Mammary epithelial cell (primary cell): ENCODE measurements at regions of chr2 and their contacts with region 1.

Region 1: DNA sequence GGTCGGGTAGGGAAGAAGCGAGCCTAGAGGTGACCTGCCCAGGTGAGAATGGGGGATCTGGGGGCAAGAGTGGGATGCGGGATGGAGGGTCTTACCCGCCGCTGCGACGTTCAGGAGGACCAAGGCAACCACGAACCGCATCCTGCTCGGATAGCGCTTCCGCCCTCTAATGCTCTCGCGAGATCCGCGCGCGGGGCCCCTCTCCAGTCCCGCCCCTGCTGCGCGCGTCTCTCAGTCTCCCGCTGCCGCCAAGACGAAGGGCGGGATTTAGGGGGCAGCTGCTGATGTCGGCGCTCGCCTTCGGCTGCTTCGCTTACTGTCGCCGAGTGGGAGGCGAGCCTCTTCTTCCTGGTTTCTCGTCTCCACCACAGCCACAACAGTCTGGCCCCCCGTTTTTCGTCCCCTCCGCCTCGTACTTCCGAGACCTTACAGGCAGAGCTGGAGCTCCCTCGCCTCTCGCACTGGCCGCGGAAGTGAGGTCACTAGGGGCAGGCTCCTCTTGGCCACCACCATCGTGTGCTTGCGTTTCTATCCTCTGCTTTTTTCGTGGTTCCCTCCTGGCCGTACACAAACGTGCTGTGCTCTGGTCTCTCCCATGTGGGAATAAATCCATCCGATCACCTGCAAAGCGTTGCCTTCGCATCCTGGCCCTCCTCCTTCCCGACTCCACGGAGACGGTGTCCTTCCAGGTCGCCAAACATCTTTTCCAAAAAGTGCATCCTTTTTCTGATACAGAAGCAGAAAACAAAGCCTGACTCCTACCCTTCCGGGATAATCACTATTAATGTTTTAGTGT is at the start of gene TGOLN2:
- DNase-seq: peak; percentile 88
- H3K4me3 ChIP-seq: peak within 1 kb of the TSS; percentile 75 to 84 (median 80)
- H3K27ac ChIP-seq: peak within 1 kb of the TSS; percentile 84
- H3K4me1 ChIP-seq: peaks cover 17% of the 10 kb centered on the region
- H3K27me3 ChIP-seq: no peaks in the 10 kb centered on the region
- CTCF ChIP-seq: no peak
- total RNA-seq, gene TGOLN2: 64.8 to 83.0 TPM

Region 2: DNA sequence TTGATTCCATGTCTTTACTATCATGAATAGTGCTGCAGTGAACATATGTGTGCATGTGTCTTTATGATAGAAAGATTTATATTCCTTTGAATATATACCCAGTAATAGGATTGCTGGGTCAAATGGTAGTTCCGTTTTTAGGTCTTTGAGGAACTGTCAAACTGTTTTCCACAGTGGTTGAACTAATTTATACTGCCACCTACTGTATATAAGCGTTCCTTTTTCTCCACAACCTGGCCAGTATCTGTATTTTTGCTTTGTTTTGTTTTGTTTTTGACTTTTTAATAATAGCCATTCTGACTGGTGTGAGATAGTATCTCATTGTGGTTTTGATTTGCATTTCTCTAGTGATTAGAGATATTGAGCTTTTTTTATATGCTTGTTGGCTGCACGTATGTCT is 1510.5 kb before region 1 on chr2:
- CTCF ChIA-PET with region 1: no interaction called
- dilution Hi-C with region 1: no loop called
- in situ Hi-C with region 1: no loop called
- intact Hi-C with region 1: no loop called
- DNase-seq: peak; percentile 2
- H3K4me3 ChIP-seq: no peak overlapping the region
- H3K27ac ChIP-seq: no peak overlapping the region
- H3K4me1 ChIP-seq: no peaks in the 10 kb centered on the region
- H3K27me3 ChIP-seq: no peaks in the 10 kb centered on the region
- CTCF ChIP-seq: peak in 1 of 2 donors; percentile 39

Region 3: GRCh38 chr2:85273738-85274731 is 54.0 kb before region 1 on chr2:
- CTCF ChIA-PET with region 1: no interaction called
- dilution Hi-C with region 1: loop called (anchors 5 kb)
- in situ Hi-C with region 1: no loop called
- intact Hi-C with region 1: no loop called
- DNase-seq: peak; percentile 96
- H3K4me3 ChIP-seq: no peak overlapping the region
- H3K27ac ChIP-seq: peak overlapping the region; percentile 23
- H3K4me1 ChIP-seq: peaks cover 49% of the 10 kb centered on the region
- H3K27me3 ChIP-seq: no peaks in the 10 kb centered on the region
- CTCF ChIP-seq: no peak

Region 4: DNA sequence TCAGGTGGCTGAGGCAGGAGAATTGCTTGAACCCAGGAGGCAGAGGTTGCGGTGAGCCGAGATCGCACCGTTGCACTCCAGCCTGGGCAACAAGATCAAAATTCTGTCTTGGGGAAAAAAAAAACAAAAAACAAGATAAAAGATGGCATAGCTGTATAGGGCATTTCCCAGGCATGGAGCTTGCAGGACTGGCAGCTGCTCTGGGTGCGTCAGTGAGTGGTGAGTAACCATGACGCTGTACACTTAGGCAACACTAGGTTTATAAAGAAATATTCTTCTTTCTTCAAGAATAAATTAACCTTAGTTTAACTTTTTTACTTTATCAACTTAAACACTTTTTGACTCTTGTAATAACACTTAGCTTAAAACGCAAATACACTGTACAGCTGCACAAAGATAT is 15.6 kb before region 1 on chr2:
- CTCF ChIA-PET with region 1: no interaction called
- dilution Hi-C with region 1: no loop called
- in situ Hi-C with region 1: no loop called
- intact Hi-C with region 1: loop called (anchors 2 kb)
- DNase-seq: peak; percentile 76
- H3K4me3 ChIP-seq: no peak overlapping the region
- H3K27ac ChIP-seq: no peak overlapping the region
- H3K4me1 ChIP-seq: no peaks in the 10 kb centered on the region
- H3K27me3 ChIP-seq: no peaks in the 10 kb centered on the region
- CTCF ChIP-seq: no peak

Region 5: GRCh38 chr2:85354286-85355072 is 26.5 kb after region 1 on chr2 and contains the starts of genes ELMOD3 and RETSAT:
- CTCF ChIA-PET with region 1: interaction called, 3 read pairs
- dilution Hi-C with region 1: no loop called
- in situ Hi-C with region 1: no loop called
- intact Hi-C with region 1: loop called (anchors 1 kb)
- DNase-seq: peak; percentile 99
- H3K4me3 ChIP-seq: peak within 1 kb of the TSS; percentile 78 to 95 (median 84)
- H3K27ac ChIP-seq: peak within 1 kb of the TSS; percentile 54
- H3K4me1 ChIP-seq: peaks cover 11% of the 10 kb centered on the region
- H3K27me3 ChIP-seq: no peaks in the 10 kb centered on the region
- CTCF ChIP-seq: no peak
- total RNA-seq, gene ELMOD3: 17.5 to 23.0 TPM
- total RNA-seq, gene RETSAT: 94.7 to 157 TPM

Region 6: GRCh38 chr2:85409845-85410583 is 82.0 kb after region 1 on chr2 and contains the start of gene CAPG:
- CTCF ChIA-PET with region 1: no interaction called
- dilution Hi-C with region 1: loop called (anchors 5 kb)
- in situ Hi-C with region 1: no loop called
- intact Hi-C with region 1: loop called (anchors 5 kb)
- DNase-seq: peak; percentile 63
- H3K4me3 ChIP-seq: peak within 1 kb of the TSS; percentile 6 to 39 (median 21)
- H3K27ac ChIP-seq: no peak within 1 kb of the TSS
- H3K4me1 ChIP-seq: peaks cover 25% of the 10 kb centered on the region
- H3K27me3 ChIP-seq: no peaks in the 10 kb centered on the region
- CTCF ChIP-seq: no peak
- total RNA-seq, gene CAPG: 140 to 186 TPM

Region 7: GRCh38 chr2:85496436-85496835 is 168.4 kb after region 1 on chr2:
- CTCF ChIA-PET with region 1: no interaction called
- dilution Hi-C with region 1: no loop called
- in situ Hi-C with region 1: no loop called
- intact Hi-C with region 1: loop called (anchors 5 kb)
- DNase-seq: no peak
- H3K4me3 ChIP-seq: no peak overlapping the region
- H3K27ac ChIP-seq: no peak overlapping the region
- H3K4me1 ChIP-seq: peaks cover 8% of the 10 kb centered on the region
- H3K27me3 ChIP-seq: no peaks in the 10 kb centered on the region
- CTCF ChIP-seq: no peak

Region 8: DNA sequence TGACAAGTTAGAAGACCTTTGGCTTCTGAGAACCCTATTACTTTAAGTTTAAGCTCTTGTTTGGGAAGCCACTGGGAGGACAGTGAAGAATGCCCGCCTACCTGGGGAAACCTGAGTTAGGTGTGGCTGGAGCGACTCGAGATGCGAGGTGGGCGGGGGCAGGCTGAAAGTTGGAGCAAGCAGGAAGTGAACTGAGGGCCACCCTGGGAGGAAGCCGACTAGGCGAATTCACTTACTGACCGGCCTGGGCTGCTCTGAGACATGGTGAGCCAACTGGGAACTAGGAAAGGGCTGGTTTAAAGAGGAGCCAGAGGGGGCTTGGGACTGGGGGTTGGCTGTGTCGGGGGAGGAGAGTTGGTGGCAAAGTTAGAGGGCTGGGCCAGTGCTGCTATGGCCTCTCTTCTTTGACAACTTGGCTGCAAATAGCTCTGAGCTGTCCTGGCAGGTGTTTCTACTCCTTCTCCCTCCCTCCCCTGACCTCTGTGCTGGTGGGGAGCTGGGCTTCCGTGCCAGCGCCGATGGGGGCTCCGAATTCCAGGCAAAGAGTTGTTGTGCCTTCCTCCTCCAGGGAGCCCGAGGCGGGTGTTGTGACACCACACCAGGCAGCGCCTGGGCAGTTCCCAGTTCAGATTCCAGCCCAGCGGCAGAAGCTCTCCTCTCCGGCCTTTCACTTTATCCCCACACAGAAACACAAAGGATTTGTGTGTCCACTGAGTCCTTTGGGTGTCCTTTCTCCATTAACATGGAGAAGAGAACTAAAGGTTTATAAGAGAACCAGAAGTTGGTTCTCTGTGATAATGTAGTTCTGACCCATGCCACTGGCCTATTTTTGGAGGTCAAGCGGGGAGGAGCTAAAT is 249.6 kb after region 1 on chr2 and contains the start of gene VAMP8:
- CTCF ChIA-PET with region 1: no interaction called
- dilution Hi-C with region 1: loop called (anchors 10 kb)
- in situ Hi-C with region 1: no loop called
- intact Hi-C with region 1: no loop called
- DNase-seq: peak; percentile 80
- H3K4me3 ChIP-seq: peak within 1 kb of the TSS; percentile 70 to 82 (median 77)
- H3K27ac ChIP-seq: peak within 1 kb of the TSS; percentile 52
- H3K4me1 ChIP-seq: peaks cover 18% of the 10 kb centered on the region
- H3K27me3 ChIP-seq: no peaks in the 10 kb centered on the region
- CTCF ChIP-seq: no peak
- total RNA-seq, gene VAMP8: 94.0 to 166 TPM

Region 9: GRCh38 chr2:86105252-86105968 is 777.4 kb after region 1 on chr2 and contains the start of gene POLR1A:
- CTCF ChIA-PET with region 1: no interaction called
- dilution Hi-C with region 1: no loop called
- in situ Hi-C with region 1: no loop called
- intact Hi-C with region 1: no loop called
- DNase-seq: peak; percentile 90
- H3K4me3 ChIP-seq: peak within 1 kb of the TSS; percentile 78 to 90 (median 88)
- H3K27ac ChIP-seq: peak within 1 kb of the TSS; percentile 87
- H3K4me1 ChIP-seq: peaks cover 25% of the 10 kb centered on the region
- H3K27me3 ChIP-seq: no peaks in the 10 kb centered on the region
- CTCF ChIP-seq: peak in 1 of 2 donors; percentile 6
- total RNA-seq, gene POLR1A: 35.7 to 49.4 TPM